Naive thymus-derived CD4-positive, alpha-beta T cell (primary cell): ENCODE measurements at regions of chr3 and their contacts with region 1.

Region 1: DNA sequence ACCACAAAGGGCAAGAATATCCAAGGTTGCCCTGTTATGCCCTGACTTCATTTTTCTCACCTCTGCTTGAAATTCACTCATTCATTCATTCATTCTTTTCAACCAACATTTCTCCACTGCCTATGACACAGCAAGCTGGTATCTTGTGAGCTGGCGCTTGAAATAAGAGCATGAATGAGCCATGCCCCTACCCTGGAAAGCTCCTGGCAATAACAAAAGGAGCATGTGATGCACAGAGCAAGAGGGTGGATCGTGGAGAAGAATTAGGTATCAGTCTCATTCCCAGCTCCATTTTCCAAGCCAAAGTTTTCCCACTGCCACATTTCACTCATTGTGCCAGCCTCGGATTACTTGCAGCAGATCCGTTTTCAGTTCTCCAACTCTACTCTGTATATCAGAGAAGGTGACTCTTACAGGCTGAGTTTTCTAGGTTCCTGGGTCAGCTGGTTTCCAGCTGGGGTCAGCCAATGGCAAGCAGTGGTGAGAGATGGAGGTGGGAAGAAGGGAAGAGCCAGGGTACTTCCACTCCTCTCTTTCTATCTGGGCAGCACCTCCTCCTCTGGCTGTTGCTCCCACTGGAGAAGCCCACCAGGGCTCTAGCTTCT is 144.8 kb downstream of the SUCLG2 start:
- DNase-seq: no peak
- ATAC-seq: no peak
- H3K4me3 ChIP-seq: no peak overlapping the region
- H3K4me3 Mint-ChIP-seq: no peak overlapping the region
- H3K27ac ChIP-seq: no peak overlapping the region
- H3K27ac Mint-ChIP-seq: no peak overlapping the region
- H3K4me1 ChIP-seq: no peaks in the 10 kb centered on the region
- H3K4me1 Mint-ChIP-seq: peaks cover 0 to 6% (median 0%) of the 10 kb centered on the region in 7 donors
- H3K27me3 ChIP-seq: no peaks in the 10 kb centered on the region
- H3K27me3 Mint-ChIP-seq: no peaks in the 10 kb centered on the region

Region 2: DNA sequence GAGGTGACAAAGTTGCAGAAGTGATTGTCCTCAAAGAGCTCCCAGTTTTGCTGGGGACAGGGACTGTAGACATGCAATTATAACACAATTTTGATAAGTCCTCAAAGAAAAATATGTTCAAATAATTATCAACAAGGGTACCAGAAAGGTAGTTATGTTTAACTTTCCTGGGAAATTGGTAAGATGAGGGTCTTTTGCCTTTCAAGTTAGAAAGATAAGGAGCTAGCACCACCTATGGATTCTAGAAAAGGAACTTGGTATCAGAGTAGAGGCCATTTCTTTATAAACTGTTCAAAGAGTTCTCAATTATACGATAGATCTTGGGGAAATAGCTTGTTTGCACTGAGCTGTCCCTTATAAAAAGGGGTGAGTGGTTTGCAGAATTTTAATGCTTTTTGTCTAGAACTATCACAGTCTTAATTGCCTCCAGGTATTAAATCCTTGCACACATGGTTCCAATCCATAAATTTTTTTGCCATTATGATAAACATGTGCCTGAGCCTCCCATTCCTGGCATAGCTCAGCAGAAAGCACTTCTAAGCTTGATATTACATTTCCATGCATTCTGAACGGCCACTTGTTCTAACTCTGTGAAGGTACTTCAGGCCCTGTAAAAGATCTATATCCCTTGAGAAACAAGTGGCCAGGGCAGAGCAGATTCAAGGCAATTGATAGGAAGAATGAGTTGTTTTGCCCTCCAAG is 761.2 kb before region 1 on chr3:
- CTCF ChIA-PET with region 1: no interaction called
- POLR2A ChIA-PET with region 1: no interaction called
- intact Hi-C with region 1: no loop called
- DNase-seq: no peak
- ATAC-seq: no peak
- H3K4me3 ChIP-seq: no peak overlapping the region
- H3K4me3 Mint-ChIP-seq: no peak overlapping the region
- H3K27ac ChIP-seq: no peak overlapping the region
- H3K27ac Mint-ChIP-seq: no peak overlapping the region
- H3K4me1 ChIP-seq: no peaks in the 10 kb centered on the region
- H3K4me1 Mint-ChIP-seq: no peaks in the 10 kb centered on the region
- H3K27me3 ChIP-seq: no peaks in the 10 kb centered on the region
- H3K27me3 Mint-ChIP-seq: peaks cover 0 to 12% (median 5%) of the 10 kb centered on the region in 5 donors

Region 3: GRCh38 chr3:67522081-67522480 is 12.5 kb after region 1 on chr3:
- CTCF ChIA-PET with region 1: no interaction called
- POLR2A ChIA-PET with region 1: interaction called, 3 read pairs
- intact Hi-C with region 1: loop called in 1 of 2 experiments (anchors 2 kb)
- DNase-seq: no peak
- ATAC-seq: no peak
- H3K4me3 ChIP-seq: no peak overlapping the region
- H3K4me3 Mint-ChIP-seq: no peak overlapping the region
- H3K27ac ChIP-seq: no peak overlapping the region
- H3K27ac Mint-ChIP-seq: no peak overlapping the region
- H3K4me1 ChIP-seq: no peaks in the 10 kb centered on the region
- H3K4me1 Mint-ChIP-seq: peaks cover 0 to 6% (median 0%) of the 10 kb centered on the region in 7 donors
- H3K27me3 ChIP-seq: no peaks in the 10 kb centered on the region
- H3K27me3 Mint-ChIP-seq: no peaks in the 10 kb centered on the region